MCF 10A (cell line): ENCODE measurements at regions of chr19 and their contacts with region 1.

Region 1: DNA sequence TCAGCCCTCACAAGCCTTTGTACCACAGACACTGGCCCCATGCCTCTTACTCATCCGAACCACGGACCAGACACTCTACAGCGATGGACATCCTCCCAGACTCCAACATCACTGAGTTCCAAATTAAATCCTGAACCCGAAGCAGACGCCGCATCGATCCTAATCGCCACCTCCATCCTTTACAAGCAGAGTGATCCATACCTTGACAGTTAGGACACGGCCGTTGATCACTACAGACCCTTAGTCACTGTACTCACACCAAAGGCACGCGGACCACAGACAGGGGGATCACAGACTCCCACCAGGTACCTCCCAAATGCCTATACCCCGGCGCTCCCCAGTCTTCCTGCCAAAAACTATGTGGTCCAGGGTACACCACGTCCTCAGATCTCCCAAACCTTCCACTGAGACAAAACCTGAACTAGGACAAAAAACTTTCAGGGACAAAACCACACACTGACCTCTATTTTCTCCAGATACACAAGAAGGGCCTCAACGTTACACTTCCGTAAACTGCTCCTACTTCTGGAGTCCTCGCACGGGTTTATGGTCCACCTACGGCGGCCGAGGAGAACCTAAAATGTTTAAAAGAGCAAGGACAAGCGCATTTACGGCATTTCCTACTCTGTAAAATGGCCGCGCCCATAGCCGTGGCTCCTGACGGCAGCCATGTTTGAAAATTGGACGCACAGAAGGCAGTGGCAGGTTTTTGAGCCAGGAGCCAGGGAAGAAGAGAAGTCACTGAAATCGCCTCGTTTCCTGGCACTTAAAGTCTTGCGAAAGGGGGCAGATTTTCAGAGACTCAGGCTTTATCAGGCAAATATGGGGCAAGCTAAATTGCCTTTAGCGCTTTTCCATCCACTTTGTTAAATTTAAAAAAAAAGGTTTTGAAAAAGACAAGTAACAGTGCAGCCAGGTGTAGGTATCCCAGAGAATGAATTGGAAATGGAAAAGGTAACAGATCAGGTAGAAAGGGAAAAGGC is at the start of gene ZNF350:
- DNase-seq: peak; percentile 94
- H3K4me3 Mint-ChIP-seq: peak within 1 kb of the TSS; percentile 88
- H3K27ac Mint-ChIP-seq: peak within 1 kb of the TSS; percentile 96
- H3K4me1 Mint-ChIP-seq: no peaks in the 10 kb centered on the region
- H3K27me3 Mint-ChIP-seq: no peaks in the 10 kb centered on the region
- CTCF ChIP-seq: no peak
- total RNA-seq, gene ZNF350: 7.0 and 8.9 TPM in 2 replicates

Region 2: DNA sequence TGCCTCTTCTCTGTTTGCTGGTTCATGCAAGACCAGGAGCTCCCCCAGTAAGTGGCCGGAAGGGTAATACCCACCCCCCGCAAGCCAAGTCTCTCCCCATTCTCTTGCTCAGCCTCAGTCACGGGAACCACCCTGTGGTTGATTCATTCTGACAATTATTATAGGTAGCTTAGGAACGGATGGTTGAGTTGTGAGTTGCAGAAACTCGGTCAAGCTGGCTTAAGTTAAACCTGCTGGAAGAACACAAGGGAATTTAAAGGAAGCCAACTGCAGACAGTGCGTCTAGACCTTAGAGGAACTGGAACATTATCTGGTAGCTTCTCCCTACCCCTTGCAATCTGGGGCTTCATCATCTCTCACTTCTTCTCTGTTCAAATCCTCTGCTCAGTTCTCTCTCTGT is 243.8 kb before region 1 on chr19:
- CTCF ChIA-PET with region 1: no interaction called
- POLR2A ChIA-PET with region 1: no interaction called
- intact Hi-C with region 1: no loop called
- DNase-seq: peak; percentile 49
- H3K4me3 Mint-ChIP-seq: no peak overlapping the region
- H3K27ac Mint-ChIP-seq: no peak overlapping the region
- H3K4me1 Mint-ChIP-seq: peaks cover 15% of the 10 kb centered on the region
- H3K27me3 Mint-ChIP-seq: no peaks in the 10 kb centered on the region
- CTCF ChIP-seq: no peak

Region 3: DNA sequence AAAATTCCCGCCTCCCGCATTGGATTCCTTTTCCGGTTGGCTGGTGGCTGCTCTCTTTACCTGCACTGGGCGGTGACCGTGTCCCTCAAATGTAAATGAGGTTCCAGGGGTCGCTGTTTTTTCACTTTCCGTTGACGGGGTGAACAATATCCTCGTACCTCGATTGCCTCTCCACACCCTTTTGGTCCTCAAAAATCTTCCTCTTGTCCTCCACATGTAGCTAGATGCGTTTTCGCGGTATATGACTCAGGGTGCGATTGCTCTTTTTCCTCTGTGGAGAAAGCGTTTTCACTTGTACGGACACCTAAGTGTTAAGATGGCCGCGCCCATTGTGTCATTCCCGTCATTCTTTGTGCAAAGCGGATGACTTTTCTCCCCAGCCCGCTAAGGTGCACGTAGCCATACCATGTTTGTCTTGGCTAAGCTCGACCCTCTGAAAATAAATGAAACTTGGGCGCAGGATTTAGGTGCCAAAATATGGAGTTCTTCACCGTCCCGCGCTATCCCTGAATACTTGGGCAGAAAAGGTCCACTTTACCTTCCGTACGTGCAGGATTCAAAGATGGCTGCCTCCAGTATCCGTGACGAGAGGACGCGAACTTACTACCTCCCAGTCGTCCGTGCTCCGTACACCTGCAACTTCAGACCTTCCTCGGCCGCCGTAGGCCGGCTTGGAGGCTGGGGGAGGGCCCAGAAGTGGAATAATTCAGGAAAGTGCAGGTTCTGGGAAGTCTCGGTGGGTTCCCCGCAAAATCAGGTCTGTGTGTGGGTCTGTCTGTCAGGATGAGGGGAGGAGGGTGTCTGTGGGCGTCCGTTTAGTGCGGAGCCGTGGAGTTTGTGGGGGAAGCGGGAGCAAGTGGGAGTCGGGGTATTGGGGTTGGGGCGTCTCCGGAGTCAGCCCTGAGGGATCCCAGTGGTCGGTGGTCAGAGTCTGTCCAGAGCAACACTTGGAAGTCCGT is 59.5 kb before region 1 on chr19 and contains the start of gene ZNF613:
- CTCF ChIA-PET with region 1: no interaction called
- POLR2A ChIA-PET with region 1: no interaction called
- intact Hi-C with region 1: loop called (anchors 2 kb)
- DNase-seq: peak; percentile 95
- H3K4me3 Mint-ChIP-seq: peak within 1 kb of the TSS; percentile 91
- H3K27ac Mint-ChIP-seq: peak within 1 kb of the TSS; percentile 89
- H3K4me1 Mint-ChIP-seq: peaks cover 9% of the 10 kb centered on the region
- H3K27me3 Mint-ChIP-seq: no peaks in the 10 kb centered on the region
- CTCF ChIP-seq: no peak
- total RNA-seq, gene ZNF613: 4.9 and 7.7 TPM in 2 replicates

Region 4: DNA sequence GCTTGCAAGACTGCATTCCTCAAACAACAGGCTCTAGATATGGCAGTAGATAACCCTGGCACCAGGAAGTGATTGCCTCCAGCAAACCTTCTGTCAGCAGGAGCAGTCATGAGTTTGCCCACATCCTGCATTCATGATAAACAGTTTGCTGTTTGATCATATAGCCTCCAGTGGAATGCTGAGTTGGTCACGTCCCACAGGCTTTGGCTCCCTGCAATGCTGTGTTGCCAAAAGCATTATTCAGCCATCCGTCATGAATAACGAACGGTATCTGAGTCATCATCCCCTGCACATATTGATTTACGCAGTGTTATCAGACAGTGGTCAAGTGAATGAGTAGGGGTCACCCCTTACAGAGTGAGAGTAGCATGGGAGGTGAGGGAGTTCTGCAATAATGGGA is 83.9 kb after region 1 on chr19:
- CTCF ChIA-PET with region 1: no interaction called
- POLR2A ChIA-PET with region 1: no interaction called
- intact Hi-C with region 1: no loop called
- DNase-seq: no peak
- H3K4me3 Mint-ChIP-seq: no peak overlapping the region
- H3K27ac Mint-ChIP-seq: no peak overlapping the region
- H3K4me1 Mint-ChIP-seq: no peaks in the 10 kb centered on the region
- H3K27me3 Mint-ChIP-seq: no peaks in the 10 kb centered on the region
- CTCF ChIP-seq: no peak